Caco-2 (cell line): ENCODE measurements at regions of chr17 and their contacts with region 1.

Region 1: DNA sequence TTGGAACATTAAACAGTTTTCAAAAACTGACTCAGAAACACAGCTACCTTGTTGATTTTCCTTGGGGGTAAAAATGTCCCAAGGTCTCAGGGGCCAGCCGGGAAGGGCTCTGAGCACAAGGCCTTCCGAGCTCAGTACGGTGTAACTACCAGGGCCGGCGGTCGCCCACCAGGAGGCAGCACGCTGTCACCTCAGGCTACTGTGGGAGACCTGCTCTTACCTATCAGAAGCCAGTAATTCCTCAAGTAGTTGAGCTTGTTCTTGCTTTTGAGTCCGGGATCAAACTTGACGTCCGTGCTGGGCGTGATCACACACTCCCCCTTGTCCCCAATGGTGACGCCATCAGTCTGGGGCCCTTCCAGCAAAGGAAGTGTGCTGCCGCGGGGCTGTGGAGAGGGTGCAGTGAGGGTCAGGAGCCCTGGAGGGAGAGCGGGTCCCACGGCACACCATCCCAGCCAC is 43.4 kb upstream of the ICAM2 start:
- DNase-seq: peak; percentile 73 to 81
- H3K4me3 ChIP-seq: no peak overlapping the region
- H3K4me3 Mint-ChIP-seq: no peak overlapping the region
- H3K27ac Mint-ChIP-seq: no peak overlapping the region
- H3K4me1 ChIP-seq: no peaks in the 10 kb centered on the region
- H3K4me1 Mint-ChIP-seq: peaks cover 11% of the 10 kb centered on the region
- H3K27me3 ChIP-seq: no peaks in the 10 kb centered on the region
- H3K27me3 Mint-ChIP-seq: no peaks in the 10 kb centered on the region
- CTCF ChIP-seq: peak; percentile 65 to 80

Region 2: GRCh38 chr17:64073771-64074703 is 10.2 kb after region 1 on chr17:
- CTCF ChIA-PET with region 1: interaction called, 11 read pairs
- POLR2A ChIA-PET with region 1: no interaction called
- intact Hi-C with region 1: no loop called
- DNase-seq: no peak
- H3K4me3 ChIP-seq: no peak overlapping the region
- H3K4me3 Mint-ChIP-seq: no peak overlapping the region
- H3K27ac Mint-ChIP-seq: peak overlapping the region; percentile 74
- H3K4me1 ChIP-seq: peaks cover 15% of the 10 kb centered on the region
- H3K4me1 Mint-ChIP-seq: peaks cover 12% of the 10 kb centered on the region
- H3K27me3 ChIP-seq: no peaks in the 10 kb centered on the region
- H3K27me3 Mint-ChIP-seq: no peaks in the 10 kb centered on the region
- CTCF ChIP-seq: no peak